Endothelial cell of umbilical vein (primary cell): ENCODE measurements at regions of chr1 and their contacts with region 1.

Region 1: GRCh38 chr1:71196685-71197084 is 115.8 kb upstream of the ZRANB2 start:
- DNase-seq: peak; percentile 16
- H3K4me3 ChIP-seq: no peak overlapping the region
- H3K27ac ChIP-seq: no peak overlapping the region
- H3K4me1 ChIP-seq: no peaks in the 10 kb centered on the region
- H3K27me3 ChIP-seq: no peaks in the 10 kb centered on the region
- CTCF ChIP-seq: peak in 1 of 2 donors; percentile 8
- POLR2A ChIP-seq: no peak

Region 2: GRCh38 chr1:70930062-70930461 is 266.6 kb before region 1 on chr1:
- CTCF ChIA-PET with region 1: no interaction called
- POLR2A ChIA-PET with region 1: no interaction called
- dilution Hi-C with region 1: no loop called
- intact Hi-C with region 1: no loop called
- DNase-seq: no peak
- H3K4me3 ChIP-seq: no peak overlapping the region
- H3K27ac ChIP-seq: no peak overlapping the region
- H3K4me1 ChIP-seq: no peaks in the 10 kb centered on the region
- H3K27me3 ChIP-seq: no peaks in the 10 kb centered on the region
- CTCF ChIP-seq: no peak
- POLR2A ChIP-seq: no peak

Region 3: DNA sequence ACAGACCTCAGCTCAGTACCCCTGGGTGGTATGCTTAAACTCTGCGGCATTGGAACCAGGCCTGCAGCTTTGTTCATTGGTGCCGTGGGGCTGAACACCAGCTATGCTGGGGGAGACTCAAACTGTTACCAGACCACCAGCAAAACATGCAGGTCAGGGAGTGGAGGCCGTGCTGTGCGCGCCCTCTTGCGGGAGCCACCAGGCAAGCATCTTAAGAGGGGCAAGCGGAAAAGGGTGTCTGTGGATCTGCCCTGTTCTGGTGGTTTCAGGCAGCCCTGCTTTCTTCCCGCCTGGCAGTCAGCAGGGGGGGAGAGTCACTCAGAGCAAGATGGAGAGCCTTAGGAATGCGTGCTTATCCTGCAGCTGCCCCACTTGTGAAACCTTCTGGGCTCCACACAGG is 161.0 kb after region 1 on chr1:
- CTCF ChIA-PET with region 1: interaction called, 18 read pairs
- POLR2A ChIA-PET with region 1: no interaction called
- dilution Hi-C with region 1: no loop called
- intact Hi-C with region 1: loop called (anchors 1 kb)
- DNase-seq: no peak
- H3K4me3 ChIP-seq: no peak overlapping the region
- H3K27ac ChIP-seq: no peak overlapping the region
- H3K4me1 ChIP-seq: no peaks in the 10 kb centered on the region
- H3K27me3 ChIP-seq: no peaks in the 10 kb centered on the region
- CTCF ChIP-seq: no peak
- POLR2A ChIP-seq: no peak